B cell (primary cell): ENCODE measurements at regions of chr3 and their contacts with region 1.

Region 1: DNA sequence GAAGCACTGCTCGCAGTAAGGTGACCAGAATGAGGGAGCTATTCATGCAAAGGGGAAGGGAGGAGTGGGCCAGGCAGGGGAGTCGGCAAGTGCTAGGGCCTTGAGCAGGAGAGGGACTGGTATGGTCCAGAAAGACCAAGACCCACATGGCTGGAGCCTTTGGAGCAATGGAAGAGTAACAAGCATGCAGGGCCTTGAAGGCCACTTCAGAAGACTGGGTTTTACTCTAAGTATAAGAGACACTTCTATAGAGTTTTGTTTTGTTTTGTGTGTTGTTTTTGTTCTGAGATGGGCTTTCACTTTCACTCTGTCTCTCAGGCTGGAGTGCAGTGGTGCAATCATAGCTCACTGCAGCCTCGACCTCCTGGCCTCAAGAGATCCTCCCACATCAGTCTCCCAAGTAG is 42.0 kb downstream of the BFSP2 start:
- DNase-seq: peak; percentile 43
- ATAC-seq: peak; percentile 62
- H3K4me3 ChIP-seq: peak overlapping the region in 4 of 5 experiments; percentile 24 to 52 (median 40)
- H3K4me3 Mint-ChIP-seq: peak overlapping the region; percentile 85
- H3K27ac ChIP-seq: peak overlapping the region; percentile 20 to 31
- H3K27ac Mint-ChIP-seq: peak overlapping the region; percentile 91
- H3K4me1 ChIP-seq: peaks cover 21 to 30% of the 10 kb centered on the region in 2 donors
- H3K4me1 Mint-ChIP-seq: peaks cover 40% of the 10 kb centered on the region
- H3K27me3 ChIP-seq: no peaks in the 10 kb centered on the region
- H3K27me3 Mint-ChIP-seq: no peaks in the 10 kb centered on the region
- CTCF ChIP-seq: no peak

Region 2: GRCh38 chr3:132352541-132353143 is 1089.2 kb before region 1 on chr3:
- CTCF ChIA-PET with region 1: no interaction called
- POLR2A ChIA-PET with region 1: no interaction called
- intact Hi-C with region 1: no loop called
- DNase-seq: peak; percentile 73
- ATAC-seq: peak; percentile 82
- H3K4me3 ChIP-seq: no peak overlapping the region
- H3K4me3 Mint-ChIP-seq: no peak overlapping the region
- H3K27ac ChIP-seq: no peak overlapping the region
- H3K27ac Mint-ChIP-seq: no peak overlapping the region
- H3K4me1 ChIP-seq: no peaks in the 10 kb centered on the region
- H3K4me1 Mint-ChIP-seq: no peaks in the 10 kb centered on the region
- H3K27me3 ChIP-seq: peaks cover 0 to 7% (median 0%) of the 10 kb centered on the region in 4 experiments
- H3K27me3 Mint-ChIP-seq: no peaks in the 10 kb centered on the region
- CTCF ChIP-seq: peak; percentile 98

Region 3: DNA sequence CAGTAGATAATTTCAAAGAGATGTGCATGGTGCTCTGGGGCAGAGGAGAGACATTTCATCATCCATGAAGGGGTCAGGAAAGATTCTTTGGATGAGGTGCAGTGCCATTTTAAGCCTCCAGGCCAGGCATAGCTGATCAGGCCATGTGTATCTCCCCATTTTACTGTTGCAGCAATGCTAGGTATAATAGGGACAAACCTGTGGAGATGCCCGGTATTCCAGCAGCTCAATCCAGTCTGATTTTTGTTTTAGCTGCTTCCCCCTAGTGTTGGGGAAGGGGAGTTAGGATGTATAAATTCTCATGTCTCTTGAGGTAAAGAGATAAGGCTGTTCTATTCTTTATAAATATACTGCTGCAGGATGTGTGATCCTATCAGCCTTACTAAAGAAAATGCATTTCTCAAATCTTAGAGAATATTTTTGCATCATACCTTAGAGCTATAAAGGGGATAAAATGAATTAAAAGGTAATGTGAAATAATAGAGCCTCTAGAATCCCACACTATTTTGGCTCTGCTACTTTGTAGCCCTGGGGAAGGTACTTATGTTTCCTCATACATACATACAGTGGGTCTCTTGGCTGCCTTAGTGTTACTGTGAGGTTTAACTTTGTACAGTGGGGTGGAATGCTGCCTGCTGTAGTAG is 136.8 kb after region 1 on chr3:
- CTCF ChIA-PET with region 1: interaction called, 29 read pairs
- POLR2A ChIA-PET with region 1: interaction called, 5 read pairs
- intact Hi-C with region 1: no loop called
- DNase-seq: peak; percentile 26
- ATAC-seq: no peak
- H3K4me3 ChIP-seq: no peak overlapping the region
- H3K4me3 Mint-ChIP-seq: peak overlapping the region; percentile 55
- H3K27ac ChIP-seq: no peak overlapping the region
- H3K27ac Mint-ChIP-seq: peak overlapping the region; percentile 16
- H3K4me1 ChIP-seq: peaks cover 33 to 34% of the 10 kb centered on the region in 2 donors
- H3K4me1 Mint-ChIP-seq: peaks cover 64% of the 10 kb centered on the region
- H3K27me3 ChIP-seq: no peaks in the 10 kb centered on the region
- H3K27me3 Mint-ChIP-seq: no peaks in the 10 kb centered on the region
- CTCF ChIP-seq: peak; percentile 56

Region 4: DNA sequence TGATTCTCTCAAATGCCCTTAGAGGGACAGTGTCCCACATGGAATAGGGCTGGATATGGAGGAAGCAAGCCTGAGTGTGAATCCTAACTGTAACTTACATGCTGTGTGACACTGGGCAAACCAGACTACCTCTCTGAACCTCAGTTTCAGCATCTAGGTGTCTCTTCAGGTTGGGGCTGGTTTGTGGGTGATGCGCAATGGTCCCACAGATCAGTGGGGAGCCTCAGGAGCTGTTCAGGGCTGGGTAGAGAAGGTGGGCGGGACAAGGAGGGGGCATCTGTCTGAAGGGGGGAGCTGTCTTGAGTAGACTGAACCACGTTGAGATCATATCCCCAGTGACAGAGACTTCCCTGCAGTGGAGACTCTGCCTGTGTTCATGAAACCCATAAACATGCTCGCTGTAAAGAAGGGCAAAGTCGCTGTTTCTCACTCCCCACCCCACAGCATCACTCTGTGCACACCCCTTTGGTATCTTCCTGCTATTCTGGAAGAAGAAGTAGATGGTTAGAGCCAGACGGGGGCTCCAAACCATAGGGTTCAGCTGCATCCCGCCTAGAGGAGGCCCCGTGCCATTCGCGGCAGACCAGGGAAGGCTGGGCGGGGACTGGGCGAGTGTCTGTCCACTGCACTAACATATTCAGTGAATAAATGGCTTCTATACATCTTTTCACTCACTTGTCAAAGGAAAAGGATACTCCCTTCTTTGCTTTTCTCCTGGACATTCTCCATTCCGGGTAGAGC is 392.2 kb after region 1 on chr3:
- CTCF ChIA-PET with region 1: no interaction called
- POLR2A ChIA-PET with region 1: no interaction called
- intact Hi-C with region 1: no loop called
- DNase-seq: no peak
- ATAC-seq: no peak
- H3K4me3 ChIP-seq: no peak overlapping the region
- H3K4me3 Mint-ChIP-seq: no peak overlapping the region
- H3K27ac ChIP-seq: no peak overlapping the region
- H3K27ac Mint-ChIP-seq: no peak overlapping the region
- H3K4me1 ChIP-seq: no peaks in the 10 kb centered on the region
- H3K4me1 Mint-ChIP-seq: no peaks in the 10 kb centered on the region
- H3K27me3 ChIP-seq: no peaks in the 10 kb centered on the region
- H3K27me3 Mint-ChIP-seq: peaks cover 6% of the 10 kb centered on the region
- CTCF ChIP-seq: no peak